ENCODE measurements at regions of chr1 and their contacts with region 1.

Region 1: GRCh38 chr1:25343872-25344271 is 5.7 kb downstream of the TMEM50A start:
- DNase-seq: no peak
- H3K4me3 ChIP-seq: no peak overlapping the region
- H3K27ac ChIP-seq: no peak overlapping the region
- H3K4me1 ChIP-seq: peaks cover 19 to 52% (median 33%) of the 10 kb centered on the region in 6 donors
- H3K27me3 ChIP-seq: no peaks in the 10 kb centered on the region
- CTCF ChIP-seq: no peak
- POLR2A ChIP-seq: no peak

Region 2: GRCh38 chr1:24805534-24806301 is 538.2 kb before region 1 on chr1:
- intact Hi-C with region 1: no loop called
- DNase-seq: no peak
- H3K4me3 ChIP-seq: no peak overlapping the region
- H3K27ac ChIP-seq: peak overlapping the region in 3 of 8 donors; percentile 4 to 22 (median 12)
- H3K4me1 ChIP-seq: peaks cover 0 to 68% (median 20%) of the 10 kb centered on the region in 6 donors
- H3K27me3 ChIP-seq: no peaks in the 10 kb centered on the region
- CTCF ChIP-seq: no peak
- POLR2A ChIP-seq: no peak

Region 3: DNA sequence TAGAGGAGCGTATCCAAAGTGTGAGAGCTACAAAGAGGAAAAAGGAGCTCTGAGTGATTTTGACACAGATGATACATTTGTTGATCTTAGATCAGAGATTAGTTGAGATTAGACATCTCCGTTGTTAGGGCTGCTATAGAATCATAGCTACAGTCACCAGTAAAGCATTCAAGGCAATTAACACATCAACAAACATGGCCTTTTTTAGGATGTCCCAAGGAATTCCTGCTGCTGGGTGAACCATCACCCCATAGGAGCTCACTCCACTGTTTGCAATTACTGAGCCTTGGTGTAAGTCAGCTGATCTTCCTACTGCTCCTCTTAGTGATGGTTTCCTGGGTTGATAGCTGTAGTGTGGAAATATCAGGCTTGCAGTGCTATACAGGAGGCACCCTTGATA is 90.0 kb before region 1 on chr1:
- intact Hi-C with region 1: loop called (anchors 10 kb)
- DNase-seq: no peak
- H3K4me3 ChIP-seq: no peak overlapping the region
- H3K27ac ChIP-seq: no peak overlapping the region
- H3K4me1 ChIP-seq: peaks cover 0 to 4% (median 0%) of the 10 kb centered on the region in 6 donors
- H3K27me3 ChIP-seq: no peaks in the 10 kb centered on the region
- CTCF ChIP-seq: no peak
- POLR2A ChIP-seq: no peak

Measured in spleen (tissue), 13 donors.